Ascending aorta (tissue), 2 donors: ENCODE measurements at regions of chr19 and their contacts with region 1.

Region 1: GRCh38 chr19:4246767-4247593 is at the start of gene YJU2:
- DNase-seq: peak; percentile 97 to 99
- H3K4me3 ChIP-seq: peak within 1 kb of the TSS; percentile 67 to 77
- H3K27ac ChIP-seq: peak within 1 kb of the TSS; percentile 90 to 96
- H3K4me1 ChIP-seq: peaks cover 0 to 4% of the 10 kb centered on the region in 2 donors
- H3K27me3 ChIP-seq: no peaks in the 10 kb centered on the region
- CTCF ChIP-seq: peak; percentile 39 to 52 (median 41)
- total RNA-seq, gene YJU2: 64.6 TPM

Region 2: DNA sequence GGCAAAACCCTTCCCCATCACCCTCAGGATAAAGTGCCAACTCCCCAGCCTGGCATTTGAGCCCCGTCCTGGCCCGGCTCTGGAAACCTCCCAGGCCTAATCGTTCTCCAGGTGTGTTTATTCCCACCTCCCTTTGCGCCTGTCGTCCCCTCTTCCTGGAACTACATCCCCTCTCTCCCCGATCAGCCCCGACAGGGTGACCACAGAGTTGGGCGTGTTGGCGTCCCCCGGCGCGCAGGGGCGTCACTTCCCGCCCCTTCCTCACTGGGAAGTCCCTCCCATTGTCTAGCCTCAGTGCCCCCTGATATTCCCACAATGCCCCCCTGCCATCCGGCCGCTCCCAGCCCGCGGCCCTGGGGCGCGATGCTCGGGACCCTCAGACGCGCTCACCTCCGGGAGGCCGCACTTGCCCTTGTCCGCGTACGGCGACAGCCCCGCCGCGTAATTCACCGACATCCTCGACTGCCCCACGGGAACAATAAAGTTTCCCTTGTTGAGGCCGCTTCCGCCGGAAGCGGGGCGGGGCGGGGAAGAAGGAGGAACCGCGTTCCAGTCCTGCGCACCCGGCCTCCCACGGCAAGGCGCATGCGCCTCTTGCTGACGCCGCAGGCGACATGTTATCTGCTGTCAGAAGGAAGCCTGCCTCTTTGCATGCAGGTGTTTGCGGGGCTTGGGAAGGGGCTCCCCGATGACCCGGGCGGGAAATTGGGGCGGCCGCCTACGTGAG is 64.7 kb before region 1 on chr19 and contains the starts of genes ANKRD24 and SIRT6:
- intact Hi-C with region 1: loop called (anchors 5 kb)
- DNase-seq: peak; percentile 78 to 97
- H3K4me3 ChIP-seq: peak within 1 kb of the TSS; percentile 75 to 96
- H3K27ac ChIP-seq: peak within 1 kb of the TSS; percentile 65 to 74
- H3K4me1 ChIP-seq: peaks cover 12 to 14% of the 10 kb centered on the region in 2 donors
- H3K27me3 ChIP-seq: no peaks in the 10 kb centered on the region
- CTCF ChIP-seq: no peak
- total RNA-seq, gene ANKRD24: not detected
- total RNA-seq, gene SIRT6: 5.9 TPM

Region 3: DNA sequence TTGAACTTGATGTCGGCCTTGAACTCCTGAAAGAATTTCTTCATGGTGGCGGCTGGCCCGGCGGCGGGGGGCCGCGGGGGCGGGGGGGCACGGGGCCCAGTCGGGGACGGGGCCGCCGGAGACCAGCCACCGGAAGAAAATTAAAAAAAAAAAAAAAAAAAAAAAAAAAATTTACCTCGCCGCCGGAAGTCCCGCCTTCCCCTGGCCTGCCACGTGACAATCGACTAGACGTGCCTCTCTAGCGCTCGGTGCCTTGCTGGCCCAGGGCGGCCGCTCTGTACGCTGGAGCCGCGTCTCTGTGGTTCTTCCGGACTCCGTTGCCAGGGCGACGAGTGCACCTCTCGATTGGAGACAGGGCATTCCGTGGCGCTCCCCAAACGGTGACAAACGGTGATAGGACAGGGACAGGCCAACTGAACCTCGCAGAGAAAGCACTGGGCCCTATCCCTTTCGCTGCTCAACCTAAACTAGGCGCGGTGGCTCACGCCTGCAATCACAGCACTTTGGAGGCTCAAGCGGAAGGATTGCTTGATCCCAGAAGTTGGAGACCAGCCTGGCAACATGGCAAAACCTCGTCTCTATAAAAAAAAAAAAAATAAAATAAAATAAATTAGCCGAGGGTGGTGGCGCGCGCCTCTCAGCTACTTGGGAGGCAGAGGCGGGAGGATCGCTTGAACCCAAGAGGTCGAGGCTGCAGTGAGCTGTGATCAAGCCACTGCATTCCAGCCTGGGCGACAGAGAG is 210.8 kb after region 1 on chr19 and contains the start of gene UBXN6:
- intact Hi-C with region 1: loop called (anchors 1 kb)
- DNase-seq: peak; percentile 88 to 99
- H3K4me3 ChIP-seq: peak within 1 kb of the TSS; percentile 86 to 99
- H3K27ac ChIP-seq: peak within 1 kb of the TSS; percentile 87 to 91
- H3K4me1 ChIP-seq: peaks cover 6 to 20% of the 10 kb centered on the region in 2 donors
- H3K27me3 ChIP-seq: no peaks in the 10 kb centered on the region
- CTCF ChIP-seq: no peak
- total RNA-seq, gene UBXN6: 560 TPM

Region 4: DNA sequence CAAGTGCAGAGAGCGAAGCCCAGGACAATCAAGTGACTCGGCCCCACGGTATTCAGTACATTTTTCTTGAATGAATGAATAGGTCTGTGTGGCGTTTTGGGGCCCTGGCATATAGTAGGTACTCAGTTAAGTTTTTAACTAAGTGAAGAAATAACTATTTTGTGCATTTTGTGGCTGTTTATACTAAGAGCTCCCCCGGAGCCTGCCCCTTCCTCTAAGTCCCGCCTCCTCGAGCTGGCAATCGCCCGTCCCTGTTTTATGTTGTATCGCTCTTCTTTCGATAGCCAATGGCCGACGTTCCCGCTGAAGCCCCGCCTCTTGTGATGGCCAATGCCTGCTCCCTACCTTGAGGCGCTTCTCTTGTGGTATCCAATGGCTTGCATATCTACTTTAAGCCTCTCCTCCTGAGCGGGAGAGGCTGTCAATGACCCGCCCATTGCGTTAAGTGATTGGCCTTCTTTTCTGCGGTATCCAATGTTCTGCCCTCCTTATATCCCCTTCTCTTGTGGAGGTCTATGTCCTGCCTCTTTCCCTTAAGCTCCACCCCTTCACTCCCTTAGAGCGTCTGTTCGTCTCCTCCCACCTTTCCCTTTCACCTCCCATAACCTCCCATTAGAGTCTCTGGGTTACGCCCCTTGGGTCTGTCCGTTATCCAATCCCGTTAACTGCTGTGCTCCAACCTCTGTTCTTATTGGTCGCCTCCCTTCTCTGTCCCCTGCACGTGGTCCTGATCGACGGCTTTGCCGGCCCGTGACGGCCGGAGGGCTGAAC is 224.6 kb after region 1 on chr19:
- intact Hi-C with region 1: loop called (anchors 5 kb)
- DNase-seq: peak; percentile 99 to 100
- H3K4me3 ChIP-seq: peak overlapping the region; percentile 94 to 100
- H3K27ac ChIP-seq: peak overlapping the region; percentile 58 to 81
- H3K4me1 ChIP-seq: peaks cover 7 to 28% of the 10 kb centered on the region in 2 donors
- H3K27me3 ChIP-seq: no peaks in the 10 kb centered on the region
- CTCF ChIP-seq: no peak